ENCODE measurements at regions of chr19 and their contacts with region 1.

Region 1: GRCh38 chr19:54159352-54160181 is at the start of gene LENG1:
- DNase-seq: peak; percentile 100
- H3K4me3 Mint-ChIP-seq: peak within 1 kb of the TSS; percentile 94
- H3K27ac Mint-ChIP-seq: peak within 1 kb of the TSS; percentile 98
- H3K4me1 Mint-ChIP-seq: peaks cover 67% of the 10 kb centered on the region
- H3K27me3 Mint-ChIP-seq: peaks cover 1% of the 10 kb centered on the region
- total RNA-seq, gene LENG1: 8.3 to 9.2 TPM

Region 2: DNA sequence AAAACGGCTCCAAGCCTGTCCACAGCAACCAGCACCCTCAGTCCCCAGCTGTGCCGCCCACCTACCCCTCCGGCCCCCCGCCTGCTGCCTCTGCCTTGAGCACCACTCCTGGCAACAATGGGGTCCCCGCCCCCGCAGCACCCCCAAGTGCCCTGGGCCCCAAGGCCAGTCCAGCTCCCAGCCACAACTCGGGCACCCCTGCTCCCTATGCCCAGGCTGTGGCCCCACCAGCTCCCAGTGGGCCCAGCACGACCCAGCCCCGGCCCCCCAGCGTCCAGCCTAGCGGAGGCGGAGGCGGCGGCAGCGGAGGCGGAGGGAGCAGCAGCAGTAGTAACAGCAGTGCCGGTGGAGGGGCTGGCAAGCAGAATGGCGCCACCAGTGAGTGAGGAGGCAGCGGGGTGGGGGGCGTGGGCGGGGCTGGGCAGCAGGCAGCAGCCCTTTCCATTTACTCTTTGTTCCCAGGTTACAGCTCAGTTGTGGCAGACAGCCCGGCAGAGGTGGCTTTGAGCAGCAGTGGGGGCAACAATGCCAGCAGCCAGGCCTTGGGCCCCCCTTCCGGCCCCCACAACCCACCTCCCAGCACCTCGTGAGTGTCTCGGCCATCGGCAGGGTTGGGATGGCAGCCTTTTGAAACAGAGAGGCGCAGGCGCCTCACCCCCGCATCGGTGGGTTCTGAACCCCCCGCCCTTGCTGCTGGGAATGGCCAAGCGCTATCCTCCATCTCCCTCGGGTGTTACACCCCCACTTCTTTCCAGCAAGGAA is 11.2 kb before region 1 on chr19:
- CTCF ChIA-PET with region 1: interaction called, 3 read pairs
- POLR2A ChIA-PET with region 1: interaction called, 12 read pairs
- DNase-seq: no peak
- H3K4me3 Mint-ChIP-seq: no peak overlapping the region
- H3K27ac Mint-ChIP-seq: no peak overlapping the region
- H3K4me1 Mint-ChIP-seq: peaks cover 2% of the 10 kb centered on the region
- H3K27me3 Mint-ChIP-seq: no peaks in the 10 kb centered on the region

Region 3: DNA sequence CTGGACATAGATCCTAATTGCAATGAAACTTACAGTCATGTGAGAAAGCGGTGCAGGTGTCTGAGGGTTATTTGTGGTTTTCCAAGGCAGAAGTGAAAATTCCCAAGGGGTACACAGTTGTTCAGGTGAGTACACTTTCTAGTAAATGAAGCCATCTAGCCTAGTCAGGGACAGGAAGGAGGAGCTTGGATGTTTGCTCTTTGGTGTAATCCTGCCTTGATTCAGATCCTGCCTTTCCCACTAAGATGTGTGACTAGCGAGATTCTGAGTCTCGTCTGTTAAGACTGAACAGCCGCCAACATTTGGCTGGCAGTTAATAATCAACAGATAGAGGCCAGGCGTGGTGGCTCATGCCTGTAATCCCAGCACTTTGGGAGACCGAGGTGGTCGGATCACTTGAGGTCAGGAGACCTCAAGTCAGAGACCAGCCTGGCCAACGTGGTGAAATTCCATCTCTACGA is 43.6 kb after region 1 on chr19:
- CTCF ChIA-PET with region 1: no interaction called
- POLR2A ChIA-PET with region 1: interaction called, 22 read pairs
- DNase-seq: no peak
- H3K4me3 Mint-ChIP-seq: peak overlapping the region; percentile 91
- H3K27ac Mint-ChIP-seq: peak overlapping the region; percentile 55
- H3K4me1 Mint-ChIP-seq: peaks cover 78% of the 10 kb centered on the region
- H3K27me3 Mint-ChIP-seq: no peaks in the 10 kb centered on the region

Region 4: DNA sequence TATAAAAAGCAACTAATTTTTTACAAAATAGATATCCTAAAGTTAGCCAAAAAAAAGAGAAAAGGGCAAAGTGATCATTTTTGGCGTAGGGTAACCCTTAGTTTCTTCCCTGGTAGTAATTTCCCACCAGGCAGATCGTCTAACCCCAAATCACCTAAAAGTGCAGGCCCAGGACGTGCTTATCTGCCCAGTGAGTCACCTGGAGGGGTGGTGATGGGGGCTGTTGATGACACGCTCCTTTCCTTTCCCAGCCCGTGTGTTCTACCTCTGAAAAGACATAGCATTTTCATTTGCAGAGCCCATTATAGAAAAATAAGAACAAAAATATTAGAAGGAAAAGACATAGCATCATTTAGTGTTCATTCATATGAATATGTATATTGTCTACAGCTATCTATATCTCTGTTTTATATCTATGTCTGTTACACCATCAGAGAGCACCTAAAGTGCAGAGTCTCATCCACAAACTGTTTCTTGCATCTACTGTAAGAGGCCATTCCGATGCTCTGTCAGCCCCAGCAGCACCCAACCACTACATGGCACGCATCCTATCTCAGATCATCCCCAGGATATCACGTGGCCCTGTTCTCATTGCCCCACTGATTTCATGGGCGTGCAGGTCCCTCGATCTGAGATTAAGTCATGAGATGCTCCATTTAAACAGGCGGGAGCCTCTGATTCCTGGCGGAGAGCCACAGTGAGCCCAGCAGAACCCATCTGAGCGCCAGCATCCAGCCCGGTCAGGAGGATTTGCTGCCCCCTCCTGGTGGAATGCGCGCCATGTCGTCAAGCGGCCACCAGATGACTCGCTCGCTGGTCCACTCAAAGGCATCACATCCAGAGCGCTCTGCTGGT is 71.7 kb after region 1 on chr19:
- CTCF ChIA-PET with region 1: no interaction called
- POLR2A ChIA-PET with region 1: no interaction called
- DNase-seq: peak; percentile 86
- H3K4me3 Mint-ChIP-seq: no peak overlapping the region
- H3K27ac Mint-ChIP-seq: no peak overlapping the region
- H3K4me1 Mint-ChIP-seq: peaks cover 5% of the 10 kb centered on the region
- H3K27me3 Mint-ChIP-seq: peaks cover 53% of the 10 kb centered on the region

Region 5: DNA sequence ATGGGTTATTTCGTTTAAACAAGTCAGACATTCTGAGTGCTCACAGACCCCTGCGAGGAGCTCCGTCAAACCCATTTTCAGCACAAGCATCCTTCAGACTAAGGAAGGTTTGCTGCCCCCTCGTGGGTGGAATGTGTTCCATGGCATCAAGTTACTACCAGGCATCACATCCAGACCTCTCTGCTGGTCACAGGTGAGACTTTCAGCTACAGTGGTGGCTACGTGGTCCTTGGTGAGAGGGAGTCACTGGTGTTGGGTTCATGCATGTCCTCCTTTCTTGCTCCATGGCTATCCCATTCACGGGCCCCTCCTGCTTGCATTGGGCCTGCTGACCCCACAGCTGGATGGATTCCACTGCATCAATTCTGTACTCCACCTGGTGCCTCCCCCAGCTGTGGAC is 106.6 kb after region 1 on chr19:
- CTCF ChIA-PET with region 1: interaction called, 14 read pairs
- POLR2A ChIA-PET with region 1: interaction called, 5 read pairs
- DNase-seq: peak; percentile 77
- H3K4me3 Mint-ChIP-seq: no peak overlapping the region
- H3K27ac Mint-ChIP-seq: no peak overlapping the region
- H3K4me1 Mint-ChIP-seq: no peaks in the 10 kb centered on the region
- H3K27me3 Mint-ChIP-seq: peaks cover 36% of the 10 kb centered on the region